ENCODE measurements at regions of chr11 and their contacts with region 1.

Region 1: DNA sequence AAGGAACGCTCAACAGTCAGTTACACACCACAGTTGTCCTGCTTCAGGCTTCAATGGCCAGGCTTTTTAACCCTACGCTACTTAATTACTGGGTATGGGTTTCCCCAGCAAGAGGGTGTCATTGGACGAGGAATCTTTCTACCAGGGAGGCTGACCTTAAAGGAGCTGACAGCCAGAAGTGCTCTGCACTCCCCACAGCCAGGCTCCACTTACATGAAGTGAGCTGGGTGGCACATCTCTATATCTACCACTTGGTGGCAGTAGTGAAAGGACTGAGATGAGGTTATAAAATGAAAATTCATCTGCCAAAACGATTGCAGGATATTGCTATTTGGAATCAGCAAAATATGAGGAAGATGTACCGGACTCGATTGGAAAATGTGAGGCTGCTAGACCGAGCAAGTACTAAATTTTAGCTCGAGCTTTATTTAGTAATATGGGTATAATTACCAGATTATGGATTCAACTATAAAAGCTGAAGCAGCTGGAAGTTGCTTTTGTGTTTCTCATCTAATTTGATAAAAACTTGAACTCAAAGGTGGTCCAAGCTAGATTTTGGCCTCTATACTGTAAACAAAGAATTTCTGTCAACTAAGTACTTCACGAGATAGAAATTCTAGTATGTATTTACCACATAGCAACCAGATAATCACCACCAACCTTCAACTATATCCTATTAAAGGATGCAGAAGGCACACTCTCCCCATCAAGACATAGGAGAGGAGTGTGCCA is 53.9 kb upstream of the CEP126 start:
- DNase-seq: peak; percentile 27
- H3K4me3 ChIP-seq: no peak overlapping the region
- H3K27ac ChIP-seq: no peak overlapping the region
- H3K4me1 ChIP-seq: no peaks in the 10 kb centered on the region
- H3K27me3 ChIP-seq: no peaks in the 10 kb centered on the region
- CTCF ChIP-seq: peak; percentile 40 to 73 (median 58)
- POLR2A ChIP-seq: no peak

Region 2: GRCh38 chr11:101508370-101508769 is 352.5 kb before region 1 on chr11:
- intact Hi-C with region 1: no loop called
- DNase-seq: no peak
- H3K4me3 ChIP-seq: no peak overlapping the region
- H3K27ac ChIP-seq: no peak overlapping the region
- H3K4me1 ChIP-seq: no peaks in the 10 kb centered on the region
- H3K27me3 ChIP-seq: no peaks in the 10 kb centered on the region
- CTCF ChIP-seq: no peak
- POLR2A ChIP-seq: no peak

Region 3: DNA sequence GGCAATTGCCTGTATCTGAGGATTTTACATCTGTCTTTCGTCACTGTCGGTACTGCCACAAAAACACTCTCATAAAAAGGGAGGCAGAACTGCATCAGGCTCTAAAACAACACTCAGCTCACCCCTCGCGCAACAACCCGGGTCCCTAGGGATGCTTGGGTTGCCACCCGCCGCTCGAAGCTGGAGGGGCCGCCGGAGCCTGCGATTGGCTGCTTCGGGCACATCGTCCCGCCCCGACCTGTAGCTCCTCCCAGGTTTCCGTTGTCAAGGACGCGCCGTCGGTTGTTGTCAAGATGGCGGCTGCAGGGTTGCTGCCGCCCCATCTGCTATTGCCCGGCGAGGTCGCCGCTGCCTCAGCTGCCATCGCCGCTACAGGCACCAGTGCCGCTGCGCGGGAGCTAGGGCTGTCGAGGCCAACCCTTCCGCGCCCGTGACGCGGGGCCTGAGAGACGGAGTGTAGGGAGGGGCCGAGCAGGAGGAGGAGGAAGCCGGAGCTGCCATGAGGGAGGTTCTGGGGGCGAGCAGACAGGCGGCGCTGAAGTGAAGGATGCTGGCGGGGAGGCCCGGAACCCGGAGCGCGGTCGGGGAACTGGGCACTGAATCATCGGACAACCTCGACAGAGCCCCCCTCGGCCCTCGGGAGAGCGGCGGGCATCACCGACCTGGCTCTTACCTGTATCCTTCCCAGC is 54.0 kb after region 1 on chr11 and contains the start of gene CEP126:
- intact Hi-C with region 1: loop called (anchors 5 kb)
- DNase-seq: peak; percentile 89
- H3K4me3 ChIP-seq: peak within 1 kb of the TSS; percentile 60 to 76
- H3K27ac ChIP-seq: peak within 1 kb of the TSS; percentile 68 to 81
- H3K4me1 ChIP-seq: no peaks in the 10 kb centered on the region
- H3K27me3 ChIP-seq: no peaks in the 10 kb centered on the region
- CTCF ChIP-seq: peak in 3 of 4 experiments; percentile 49 to 70 (median 65)
- POLR2A ChIP-seq: peak; percentile 28
- total RNA-seq, gene CEP126: 2.0 to 15.2 TPM

Region 4: GRCh38 chr11:102007567-102008437 is 146.9 kb after region 1 on chr11:
- intact Hi-C with region 1: loop called (anchors 2 kb)
- DNase-seq: peak; percentile 42
- H3K4me3 ChIP-seq: no peak overlapping the region
- H3K27ac ChIP-seq: peak overlapping the region in 1 of 2 donors; percentile 28
- H3K4me1 ChIP-seq: no peaks in the 10 kb centered on the region
- H3K27me3 ChIP-seq: no peaks in the 10 kb centered on the region
- CTCF ChIP-seq: peak in 3 of 4 experiments; percentile 72 to 79 (median 77)
- POLR2A ChIP-seq: no peak

Region 5: DNA sequence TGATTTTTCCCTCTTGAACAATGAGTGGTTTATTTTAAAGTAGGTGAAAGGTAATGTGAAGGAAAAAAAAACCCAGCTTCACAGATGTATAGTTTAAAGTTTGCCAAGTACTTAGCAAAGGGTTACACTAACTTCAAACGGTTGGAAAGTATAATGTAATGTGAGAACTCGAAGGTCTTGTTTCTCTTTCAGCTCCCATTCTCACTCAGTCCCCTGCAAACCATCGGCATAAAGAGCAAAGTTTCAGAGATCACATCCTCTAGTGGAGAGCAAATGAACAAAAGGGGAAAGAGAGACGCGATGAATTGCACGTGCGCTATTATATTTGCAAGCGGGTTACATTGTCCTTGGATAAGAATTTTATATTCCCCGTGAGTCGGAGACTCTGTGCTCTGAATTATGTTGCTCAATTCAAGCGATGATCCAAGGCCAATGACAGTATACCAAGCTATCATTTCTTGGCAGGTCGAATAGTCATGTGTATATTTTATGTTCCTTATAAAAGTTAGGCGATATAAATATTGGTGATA is 418.8 kb after region 1 on chr11:
- intact Hi-C with region 1: loop called (anchors 10 kb)
- DNase-seq: peak; percentile 49
- H3K4me3 ChIP-seq: no peak overlapping the region
- H3K27ac ChIP-seq: peak overlapping the region in 1 of 2 donors; percentile 21
- H3K4me1 ChIP-seq: no peaks in the 10 kb centered on the region
- H3K27me3 ChIP-seq: no peaks in the 10 kb centered on the region
- CTCF ChIP-seq: peak in 1 of 4 experiments; percentile 11
- POLR2A ChIP-seq: no peak

Region 6: DNA sequence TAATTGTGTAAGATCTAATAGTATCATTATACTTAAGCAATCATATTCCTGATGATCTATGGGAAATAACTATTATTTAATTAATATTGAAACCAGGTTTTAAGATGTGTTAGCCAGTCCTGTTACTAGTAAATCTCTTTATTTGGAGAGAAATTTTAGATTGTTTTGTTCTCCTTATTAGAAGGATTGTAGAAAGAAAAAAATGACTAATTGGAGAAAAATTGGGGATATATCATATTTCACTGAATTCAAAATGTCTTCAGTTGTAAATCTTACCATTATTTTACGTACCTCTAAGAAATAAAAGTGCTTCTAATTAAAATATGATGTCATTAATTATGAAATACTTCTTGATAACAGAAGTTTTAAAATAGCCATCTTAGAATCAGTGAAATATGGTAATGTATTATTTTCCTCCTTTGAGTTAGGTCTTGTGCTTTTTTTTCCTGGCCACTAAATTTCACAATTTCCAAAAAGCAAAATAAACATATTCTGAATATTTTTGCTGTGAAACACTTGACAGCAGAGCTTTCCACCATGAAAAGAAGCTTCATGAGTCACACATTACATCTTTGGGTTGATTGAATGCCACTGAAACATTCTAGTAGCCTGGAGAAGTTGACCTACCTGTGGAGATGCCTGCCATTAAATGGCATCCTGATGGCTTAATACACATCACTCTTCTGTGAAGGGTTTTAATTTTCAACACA is 462.8 kb after region 1 on chr11:
- intact Hi-C with region 1: loop called (anchors 10 kb)
- DNase-seq: no peak
- H3K4me3 ChIP-seq: no peak overlapping the region
- H3K27ac ChIP-seq: no peak overlapping the region
- H3K4me1 ChIP-seq: no peaks in the 10 kb centered on the region
- H3K27me3 ChIP-seq: no peaks in the 10 kb centered on the region
- CTCF ChIP-seq: no peak
- POLR2A ChIP-seq: no peak

Measured in prostate gland (tissue), 2 donors.